ENCODE measurements at regions of chr20 and their contacts with region 1.

Region 1: GRCh38 chr20:40962730-40963504 is 65.7 kb upstream of the TOP1 start:
- DNase-seq: no peak
- ATAC-seq: peak; percentile 93
- H3K4me3 ChIP-seq: no peak overlapping the region
- H3K27ac ChIP-seq: no peak overlapping the region
- H3K4me1 ChIP-seq: no peaks in the 10 kb centered on the region
- H3K27me3 ChIP-seq: no peaks in the 10 kb centered on the region; a peak in 1 of 4 replicates
- CTCF ChIP-seq: peak; percentile 76 to 92 (median 78)
- EP300 ChIP-seq: no peak
- POLR2A ChIP-seq: no peak
- RAD21 ChIP-seq: peak; percentile 91

Region 2: GRCh38 chr20:40741507-40742106 is 221.3 kb before region 1 on chr20:
- CTCF ChIA-PET with region 1: interaction called, 53 read pairs
- POLR2A ChIA-PET with region 1: no interaction called
- RAD21 ChIA-PET with region 1: interaction called, 19 read pairs
- SMC1A ChIA-PET with region 1: interaction called, 25 read pairs
- in situ Hi-C with region 1: no loop called
- intact Hi-C with region 1: loop called (anchors 1 kb)
- DNase-seq: no peak
- ATAC-seq: peak; percentile 82
- H3K4me3 ChIP-seq: no peak overlapping the region
- H3K27ac ChIP-seq: no peak overlapping the region
- H3K4me1 ChIP-seq: no peaks in the 10 kb centered on the region
- H3K27me3 ChIP-seq: peaks cover 3 to 6% of the 10 kb centered on the region in 2 experiments; a peak in 2 of 4 replicates
- CTCF ChIP-seq: peak; percentile 59 to 79 (median 74)
- EP300 ChIP-seq: no peak
- POLR2A ChIP-seq: no peak
- RAD21 ChIP-seq: peak; percentile 51

Region 3: DNA sequence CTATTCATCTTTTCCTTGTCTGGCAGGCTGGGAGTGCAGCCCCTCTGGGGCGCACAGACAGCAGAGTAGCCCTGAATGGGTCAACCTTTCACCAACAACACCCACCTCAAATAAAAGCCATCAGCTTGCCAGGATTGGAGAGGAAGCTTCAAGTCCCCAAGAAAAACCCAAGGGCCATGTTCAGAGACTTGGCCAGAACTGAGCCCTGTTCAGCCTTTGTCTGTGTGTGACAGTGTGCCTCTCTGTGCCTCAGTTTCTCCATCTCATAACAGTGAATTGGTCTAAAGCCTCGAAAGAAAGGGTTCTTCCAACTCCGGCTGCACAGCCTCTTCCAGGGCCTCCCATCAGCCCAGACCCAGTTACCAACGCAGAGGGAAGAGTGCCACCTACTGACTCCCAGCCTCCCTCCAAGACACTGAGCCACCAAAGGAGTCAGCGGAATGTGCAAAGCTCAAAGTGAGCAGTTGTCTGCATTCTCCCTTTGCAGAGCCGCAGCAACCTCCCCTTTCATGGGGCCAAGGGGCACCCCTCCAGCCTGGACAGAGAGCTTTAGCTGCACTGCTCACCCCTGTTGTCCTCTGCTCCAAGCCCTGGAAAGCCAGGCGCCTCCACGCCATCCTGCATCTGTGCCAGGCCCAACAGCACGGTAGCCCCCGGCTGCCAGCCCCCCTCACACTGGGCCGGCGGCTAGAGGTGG is 17.0 kb before region 1 on chr20:
- CTCF ChIA-PET with region 1: interaction called, 11 read pairs
- POLR2A ChIA-PET with region 1: no interaction called
- RAD21 ChIA-PET with region 1: interaction called, 3 read pairs
- SMC1A ChIA-PET with region 1: interaction called, 4 read pairs
- in situ Hi-C with region 1: no loop called
- intact Hi-C with region 1: no loop called
- DNase-seq: no peak
- ATAC-seq: peak; percentile 78
- H3K4me3 ChIP-seq: no peak overlapping the region
- H3K27ac ChIP-seq: no peak overlapping the region
- H3K4me1 ChIP-seq: peaks cover 14% of the 10 kb centered on the region
- H3K27me3 ChIP-seq: no peaks in the 10 kb centered on the region
- CTCF ChIP-seq: peak; percentile 52 to 63 (median 60); a peak in 5 of 6 replicates
- EP300 ChIP-seq: no peak
- POLR2A ChIP-seq: no peak
- RAD21 ChIP-seq: peak; percentile 70

Region 4: GRCh38 chr20:41072190-41072863 is 109.4 kb after region 1 on chr20:
- CTCF ChIA-PET with region 1: interaction called, 11 read pairs
- POLR2A ChIA-PET with region 1: no interaction called
- RAD21 ChIA-PET with region 1: no interaction called
- SMC1A ChIA-PET with region 1: interaction called, 16 read pairs
- in situ Hi-C with region 1: no loop called
- intact Hi-C with region 1: no loop called
- DNase-seq: no peak
- ATAC-seq: peak; percentile 18; the same call in 2 of the 3 replicates
- H3K4me3 ChIP-seq: no peak overlapping the region
- H3K27ac ChIP-seq: peak overlapping the region; percentile 9; the same call in 1 of the 2 replicates
- H3K4me1 ChIP-seq: peaks cover 15% of the 10 kb centered on the region
- H3K27me3 ChIP-seq: no peaks in the 10 kb centered on the region
- CTCF ChIP-seq: no peak
- EP300 ChIP-seq: no peak
- POLR2A ChIP-seq: no peak
- RAD21 ChIP-seq: no peak

Region 5: DNA sequence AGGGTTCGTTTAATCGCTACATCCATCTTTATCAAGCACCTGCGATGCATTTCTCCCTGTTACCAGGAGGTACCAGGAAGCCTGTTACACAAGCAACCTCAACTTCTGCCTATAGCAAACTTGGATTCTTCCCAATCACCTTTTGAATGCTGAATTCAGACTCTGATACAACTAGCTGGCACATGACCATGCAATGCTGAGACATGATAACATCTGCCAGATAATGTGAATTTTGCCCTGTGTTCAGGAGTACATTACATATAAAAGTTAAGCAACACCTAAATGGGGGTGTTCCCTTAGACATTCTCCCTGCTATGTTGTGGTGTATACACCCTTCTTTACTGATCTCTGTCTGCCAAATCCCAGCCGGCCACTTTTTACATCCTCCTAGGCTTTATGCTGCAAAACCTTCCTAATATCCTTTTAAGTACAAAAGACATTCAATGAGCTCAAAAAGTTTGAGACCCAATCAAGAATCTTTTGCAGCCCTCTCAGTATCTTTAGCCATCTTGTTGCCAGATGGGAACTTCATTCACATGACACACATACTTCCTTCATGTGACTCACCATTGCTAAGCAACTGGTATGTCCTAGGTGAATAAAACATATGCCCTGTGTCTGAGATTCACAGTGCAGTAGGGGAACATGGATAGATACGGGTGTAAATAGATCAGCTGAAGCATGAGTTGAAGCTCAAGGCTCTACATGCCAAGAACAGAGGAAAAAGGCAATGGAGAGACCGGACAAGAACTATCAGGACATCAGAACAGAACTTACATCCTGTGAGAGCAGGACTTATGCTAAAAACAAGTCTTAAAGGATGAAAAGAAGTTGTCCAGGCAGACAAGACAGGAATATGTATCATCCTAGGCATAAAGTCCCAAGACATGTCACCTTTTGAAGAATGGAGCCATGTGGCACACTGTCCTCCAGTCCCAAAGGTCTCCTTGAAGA is 270.3 kb after region 1 on chr20:
- CTCF ChIA-PET with region 1: interaction called, 40 read pairs
- POLR2A ChIA-PET with region 1: no interaction called
- RAD21 ChIA-PET with region 1: interaction called, 16 read pairs
- SMC1A ChIA-PET with region 1: interaction called, 13 read pairs
- in situ Hi-C with region 1: loop called (anchors 10 kb)
- intact Hi-C with region 1: loop called (anchors 2 kb)
- DNase-seq: no peak
- ATAC-seq: no peak
- H3K4me3 ChIP-seq: no peak overlapping the region
- H3K27ac ChIP-seq: no peak overlapping the region
- H3K4me1 ChIP-seq: no peaks in the 10 kb centered on the region
- H3K27me3 ChIP-seq: no peaks in the 10 kb centered on the region
- CTCF ChIP-seq: no peak
- EP300 ChIP-seq: no peak
- POLR2A ChIP-seq: no peak
- RAD21 ChIP-seq: no peak